PC-3 (cell line): ENCODE measurements at regions of chr9 and their contacts with region 1.

Region 1: DNA sequence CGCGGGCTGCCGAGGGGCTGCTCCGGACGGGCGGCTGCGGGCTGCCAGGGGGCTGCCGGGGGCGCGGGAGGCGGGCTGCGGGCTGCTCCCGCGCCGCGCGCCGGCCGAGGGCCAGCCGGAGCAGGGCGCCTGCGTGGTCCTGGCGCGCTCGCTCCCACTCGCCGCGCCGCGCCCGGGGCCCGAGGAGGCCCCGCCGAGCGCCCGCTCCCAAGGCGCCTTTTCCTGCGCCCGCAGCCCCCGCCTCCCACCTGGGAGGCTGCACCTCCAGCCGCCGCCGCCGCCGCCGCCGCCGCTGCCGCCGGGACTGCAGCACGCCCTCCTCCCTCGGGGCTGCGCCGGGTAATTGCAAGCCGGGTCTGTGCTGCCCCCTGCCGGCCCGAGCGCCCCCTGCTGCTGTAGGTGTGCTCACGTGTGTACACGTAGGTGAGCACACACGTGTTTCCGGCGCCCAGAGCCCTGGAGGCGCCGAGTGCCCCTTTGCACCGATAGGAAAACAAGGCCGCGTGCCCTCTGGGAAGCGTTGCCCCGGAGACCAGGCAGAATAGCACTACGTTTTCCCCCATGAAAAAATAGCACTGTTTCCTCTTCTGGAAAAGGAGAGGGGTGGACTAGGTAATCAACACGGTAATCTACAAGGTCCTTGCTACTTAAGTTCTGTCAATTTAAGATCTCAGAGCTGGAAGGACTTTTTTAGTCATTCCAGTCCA is at the start of gene EPB41L4B:
- DNase-seq: peak; percentile 88
- ATAC-seq: peak; percentile 45
- H3K4me3 ChIP-seq: peak within 1 kb of the TSS; percentile 93
- H3K27ac ChIP-seq: peak within 1 kb of the TSS; percentile 68
- H3K4me1 ChIP-seq: peaks cover 34% of the 10 kb centered on the region
- H3K27me3 ChIP-seq: no peaks in the 10 kb centered on the region
- CTCF ChIP-seq: peak; percentile 78
- total RNA-seq, gene EPB41L4B: 11.2 and 13.8 TPM in 2 replicates

Region 2: DNA sequence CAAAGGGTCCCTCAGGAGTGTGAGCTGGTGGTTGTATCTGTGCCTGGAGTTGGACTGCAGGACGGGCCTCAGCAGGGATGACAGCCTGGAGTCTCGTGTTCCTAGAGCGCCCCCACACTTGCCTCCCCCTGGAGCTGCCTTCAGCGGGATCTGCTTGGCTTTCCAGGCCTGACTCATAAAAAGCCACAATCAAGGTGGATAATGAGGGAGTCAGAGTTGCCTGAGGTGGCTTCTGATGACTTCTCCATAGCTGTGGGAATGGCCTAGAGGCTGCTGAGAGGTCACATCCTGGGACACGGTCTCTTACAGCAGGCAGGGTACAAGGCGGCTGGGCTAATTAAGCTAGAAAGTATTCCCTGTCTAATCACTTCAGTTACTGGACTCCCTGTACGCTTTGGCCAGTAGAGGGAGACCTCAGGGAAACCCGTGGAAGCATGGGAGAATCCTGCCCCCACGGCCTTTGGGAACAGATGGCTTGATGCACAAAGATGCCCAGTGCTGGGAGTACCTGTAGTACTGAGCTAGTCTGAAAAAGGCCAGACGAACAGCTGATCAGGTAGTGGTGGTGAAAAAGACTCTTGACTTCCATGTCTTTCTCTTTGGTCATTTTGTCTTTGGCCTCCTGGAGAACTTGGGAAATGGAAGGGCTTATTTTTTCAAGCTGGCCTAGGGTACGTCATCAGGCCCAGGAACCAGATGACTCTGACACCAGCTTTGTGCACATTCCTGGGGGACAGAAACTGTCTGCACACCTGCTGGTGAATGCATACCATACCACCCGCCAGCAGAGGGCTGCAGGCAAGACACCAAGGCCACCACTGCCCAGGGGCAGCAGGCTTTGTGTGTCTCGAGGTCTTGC is 137.7 kb before region 1 on chr9:
- CTCF ChIA-PET with region 1: interaction called, 4 read pairs
- POLR2A ChIA-PET with region 1: no interaction called
- intact Hi-C with region 1: loop called (anchors 2 kb)
- DNase-seq: peak; percentile 55
- ATAC-seq: peak; percentile 94
- H3K4me3 ChIP-seq: no peak overlapping the region
- H3K27ac ChIP-seq: no peak overlapping the region
- H3K4me1 ChIP-seq: no peaks in the 10 kb centered on the region
- H3K27me3 ChIP-seq: no peaks in the 10 kb centered on the region
- CTCF ChIP-seq: peak; percentile 63

Region 3: DNA sequence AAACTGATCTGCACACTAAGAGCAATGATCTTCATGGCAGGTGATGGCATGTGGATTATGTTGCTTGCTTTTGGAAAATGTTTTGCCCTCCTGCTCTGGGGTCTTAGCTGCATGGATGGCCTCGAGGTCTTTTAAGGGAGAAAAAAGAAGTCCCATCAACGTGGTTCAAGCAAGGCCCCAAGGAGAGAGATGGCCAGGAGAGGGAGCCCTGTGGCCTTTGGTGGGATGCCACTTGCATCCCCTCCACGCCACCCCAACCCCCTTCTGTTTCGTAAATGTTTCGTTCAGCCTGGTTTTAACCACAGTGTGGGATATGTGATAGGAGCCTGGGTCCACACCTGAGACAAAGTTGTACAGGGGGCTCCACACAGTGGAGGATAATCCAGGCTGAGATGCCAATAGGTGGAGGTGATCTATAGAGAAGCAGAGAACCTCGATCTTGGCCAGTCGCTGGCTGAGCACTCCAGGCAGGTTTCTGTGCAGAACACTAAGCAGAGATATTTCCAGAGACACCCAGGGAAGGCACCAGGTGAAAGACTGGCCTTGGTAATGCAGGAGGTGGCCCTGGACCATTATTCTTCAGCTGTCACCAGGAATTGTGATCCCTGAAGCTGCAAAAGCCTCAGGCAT is 128.0 kb before region 1 on chr9:
- CTCF ChIA-PET with region 1: no interaction called
- POLR2A ChIA-PET with region 1: no interaction called
- intact Hi-C with region 1: loop called (anchors 1 kb)
- DNase-seq: peak; percentile 38
- ATAC-seq: peak; percentile 49
- H3K4me3 ChIP-seq: no peak overlapping the region
- H3K27ac ChIP-seq: no peak overlapping the region
- H3K4me1 ChIP-seq: no peaks in the 10 kb centered on the region
- H3K27me3 ChIP-seq: no peaks in the 10 kb centered on the region
- CTCF ChIP-seq: peak; percentile 68

Region 4: DNA sequence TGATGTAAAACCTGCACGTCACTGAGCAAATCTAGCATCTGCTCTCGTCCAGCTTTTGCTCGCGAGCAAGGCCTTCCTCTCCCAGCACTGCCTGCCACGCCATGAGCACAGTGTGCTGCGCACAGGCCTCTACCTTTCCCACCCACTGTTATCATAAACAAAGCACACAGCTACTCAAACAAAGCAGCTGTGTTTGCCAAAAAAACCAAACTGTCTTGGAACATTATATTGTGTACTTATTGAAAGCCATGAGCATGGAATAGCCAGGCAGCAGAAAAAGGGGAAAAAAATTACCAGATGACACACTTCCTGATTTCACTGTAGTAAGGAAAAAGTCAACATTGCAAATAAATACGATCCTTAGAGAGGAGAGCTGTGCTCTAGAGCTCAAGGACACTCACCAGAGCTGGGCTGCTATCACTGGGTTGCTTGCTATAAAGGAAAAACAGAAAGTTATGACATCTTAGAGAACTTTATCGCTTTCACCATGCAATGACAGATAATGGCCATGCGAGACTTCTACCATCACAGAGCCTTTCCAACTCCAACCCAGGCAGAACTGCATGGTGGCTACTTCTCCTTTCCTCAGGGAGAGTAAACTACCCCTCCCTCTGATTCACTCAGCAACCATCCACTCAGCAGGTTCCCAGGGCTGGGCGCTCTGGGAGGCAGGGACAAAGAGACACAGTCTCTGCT is 69.7 kb before region 1 on chr9:
- CTCF ChIA-PET with region 1: interaction called, 3 read pairs
- POLR2A ChIA-PET with region 1: interaction called, 10 read pairs
- intact Hi-C with region 1: loop called (anchors 1 kb)
- DNase-seq: peak; percentile 94
- ATAC-seq: peak; percentile 75
- H3K4me3 ChIP-seq: peak overlapping the region; percentile 51
- H3K27ac ChIP-seq: peak overlapping the region; percentile 100
- H3K4me1 ChIP-seq: peaks cover 60% of the 10 kb centered on the region
- H3K27me3 ChIP-seq: no peaks in the 10 kb centered on the region
- CTCF ChIP-seq: no peak

Region 5: GRCh38 chr9:109307380-109308240 is 13.3 kb before region 1 on chr9:
- CTCF ChIA-PET with region 1: interaction called, 6 read pairs
- POLR2A ChIA-PET with region 1: no interaction called
- intact Hi-C with region 1: loop called (anchors 1 kb)
- DNase-seq: peak; percentile 78
- ATAC-seq: peak; percentile 91
- H3K4me3 ChIP-seq: no peak overlapping the region
- H3K27ac ChIP-seq: no peak overlapping the region
- H3K4me1 ChIP-seq: peaks cover 25% of the 10 kb centered on the region
- H3K27me3 ChIP-seq: no peaks in the 10 kb centered on the region
- CTCF ChIP-seq: no peak

Region 6: GRCh38 chr9:109520478-109521132 is 199.7 kb after region 1 on chr9:
- CTCF ChIA-PET with region 1: no interaction called
- POLR2A ChIA-PET with region 1: no interaction called
- intact Hi-C with region 1: no loop called
- DNase-seq: peak; percentile 87
- ATAC-seq: peak; percentile 96
- H3K4me3 ChIP-seq: no peak overlapping the region
- H3K27ac ChIP-seq: no peak overlapping the region
- H3K4me1 ChIP-seq: no peaks in the 10 kb centered on the region
- H3K27me3 ChIP-seq: no peaks in the 10 kb centered on the region
- CTCF ChIP-seq: peak; percentile 83